ENCODE measurements at regions of chr5 and their contacts with region 1.

Region 1: DNA sequence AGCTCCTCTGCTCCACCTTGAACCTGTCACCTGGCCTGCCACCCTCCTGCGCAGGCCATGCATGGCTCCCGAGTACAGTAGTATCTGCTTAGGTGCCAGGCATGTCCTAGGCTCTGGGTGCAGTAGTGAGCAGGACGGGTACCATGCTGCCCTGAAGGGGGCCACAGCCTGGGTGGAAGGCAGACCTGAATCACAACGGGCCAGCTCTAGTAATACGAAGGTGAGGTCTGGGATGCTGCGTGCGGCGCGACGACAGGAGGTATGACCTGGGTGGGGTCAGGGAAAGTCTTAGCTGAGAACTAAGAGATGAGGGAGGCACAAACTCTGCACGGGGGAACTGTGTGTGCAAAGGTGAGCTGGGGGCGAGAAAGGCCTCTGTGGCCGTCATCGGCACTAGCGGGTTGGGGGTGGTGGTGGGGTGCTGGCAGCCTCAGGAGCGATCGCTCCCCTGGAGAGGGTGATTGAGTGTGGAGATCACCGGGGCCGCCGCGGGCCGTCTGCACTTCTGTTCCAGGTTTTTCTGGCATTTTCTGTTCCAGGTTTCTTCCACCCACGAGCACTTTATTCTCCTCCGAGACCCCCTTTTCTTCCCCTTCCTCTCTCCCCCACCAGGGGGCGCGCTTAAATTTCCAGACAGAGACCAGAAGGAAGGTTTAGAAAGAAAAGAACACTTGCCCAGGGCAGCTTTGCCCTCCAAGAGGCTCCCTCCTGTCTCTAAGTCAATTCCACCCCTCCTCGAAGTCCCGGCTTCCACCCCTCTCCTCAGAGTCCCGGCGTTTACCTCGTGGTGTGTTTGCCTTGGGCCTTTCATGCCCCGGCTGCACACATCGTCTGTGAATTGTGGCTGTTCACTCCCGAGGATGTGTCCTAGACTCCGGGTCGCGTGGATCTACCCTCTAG is 15.1 kb downstream of the PDLIM4 start:
- DNase-seq: no peak
- ATAC-seq: no peak
- H3K4me3 ChIP-seq: no peak overlapping the region
- H3K27ac ChIP-seq: no peak overlapping the region
- H3K4me1 ChIP-seq: peaks cover 30% of the 10 kb centered on the region
- H3K27me3 ChIP-seq: no peaks in the 10 kb centered on the region
- CTCF ChIP-seq: peak; percentile 66 to 81 (median 77)
- EP300 ChIP-seq: no peak
- POLR2A ChIP-seq: no peak
- RAD21 ChIP-seq: peak; percentile 67

Region 2: GRCh38 chr5:132260714-132261551 is 11.6 kb before region 1 on chr5:
- CTCF ChIA-PET with region 1: interaction called, 18 read pairs
- POLR2A ChIA-PET with region 1: interaction called, 7 read pairs
- RAD21 ChIA-PET with region 1: interaction called, 4 read pairs
- SMC1A ChIA-PET with region 1: interaction called, 7 read pairs
- in situ Hi-C with region 1: no loop called
- intact Hi-C with region 1: no loop called
- DNase-seq: peak; percentile 61
- ATAC-seq: peak; percentile 73
- H3K4me3 ChIP-seq: no peak overlapping the region
- H3K27ac ChIP-seq: no peak overlapping the region
- H3K4me1 ChIP-seq: peaks cover 6% of the 10 kb centered on the region; the same call in 1 of the 2 replicates
- H3K27me3 ChIP-seq: peaks cover 2 to 7% of the 10 kb centered on the region in 2 experiments
- CTCF ChIP-seq: no peak
- EP300 ChIP-seq: no peak
- POLR2A ChIP-seq: no peak
- RAD21 ChIP-seq: no peak

Region 3: DNA sequence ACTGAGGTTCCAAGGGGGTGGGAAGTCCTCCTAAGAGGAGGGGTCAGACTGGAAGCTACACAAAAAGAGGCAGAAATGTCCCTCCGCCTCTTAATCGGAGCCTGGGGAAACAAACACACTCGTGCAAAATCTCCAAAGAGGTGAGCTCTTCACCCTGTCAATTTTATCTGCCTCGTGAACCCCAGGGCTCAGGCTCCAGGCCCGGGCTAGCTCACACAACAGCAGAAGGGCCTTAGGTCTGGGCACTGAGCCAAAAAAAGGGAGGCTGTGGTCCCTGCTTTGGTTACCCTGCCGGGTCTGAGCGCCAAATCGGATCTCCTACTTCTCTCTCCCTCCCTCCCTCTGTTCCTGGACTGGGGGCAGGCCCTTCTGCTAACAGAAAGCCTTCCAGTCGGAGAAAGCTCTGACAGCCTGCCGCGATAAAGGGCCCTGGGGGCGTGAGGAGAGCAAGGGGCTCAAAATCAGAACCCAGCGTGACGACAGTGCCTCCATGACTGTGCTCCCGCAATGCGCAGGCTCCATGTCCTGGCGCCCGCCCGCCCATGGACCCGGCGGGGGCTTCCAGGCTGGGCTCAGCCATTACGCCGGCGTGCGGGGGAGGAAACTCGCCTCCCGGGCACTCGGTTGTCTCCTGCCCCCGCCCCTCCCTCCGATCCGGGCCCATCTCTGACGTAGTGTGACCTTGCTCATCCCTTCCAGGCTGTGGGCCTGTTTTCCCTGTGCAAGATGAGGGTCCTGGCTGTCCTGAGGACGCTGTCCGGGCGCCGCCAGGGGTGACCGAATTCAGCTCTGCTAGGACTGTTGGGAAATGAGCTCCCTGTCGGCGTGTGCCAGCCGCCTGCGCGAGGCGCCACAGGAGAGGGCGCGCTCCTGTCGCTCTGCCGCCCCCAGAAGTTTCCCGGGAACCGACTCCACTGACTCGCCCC is 20.8 kb after region 1 on chr5:
- CTCF ChIA-PET with region 1: interaction called, 14 read pairs
- POLR2A ChIA-PET with region 1: interaction called, 10 read pairs
- RAD21 ChIA-PET with region 1: interaction called, 6 read pairs
- SMC1A ChIA-PET with region 1: interaction called, 4 read pairs
- in situ Hi-C with region 1: no loop called
- intact Hi-C with region 1: no loop called
- DNase-seq: no peak
- ATAC-seq: peak; percentile 67
- H3K4me3 ChIP-seq: peak overlapping the region; percentile 70
- H3K27ac ChIP-seq: no peak overlapping the region
- H3K4me1 ChIP-seq: peaks cover 21% of the 10 kb centered on the region
- H3K27me3 ChIP-seq: peaks cover 5 to 25% of the 10 kb centered on the region in 2 experiments; a peak in 3 of 4 replicates
- CTCF ChIP-seq: peak in 2 of 3 experiments; percentile 10 to 18; a peak in 2 of 6 replicates
- EP300 ChIP-seq: no peak
- POLR2A ChIP-seq: peak; percentile 60; the same call in 1 of the 2 replicates
- RAD21 ChIP-seq: no peak

Region 4: GRCh38 chr5:132354381-132355139 is 82.0 kb after region 1 on chr5:
- CTCF ChIA-PET with region 1: interaction called, 4 read pairs
- POLR2A ChIA-PET with region 1: no interaction called
- RAD21 ChIA-PET with region 1: interaction called, 11 read pairs
- SMC1A ChIA-PET with region 1: interaction called, 3 read pairs
- in situ Hi-C with region 1: no loop called
- intact Hi-C with region 1: no loop called
- DNase-seq: no peak
- ATAC-seq: peak; percentile 12; the same call in 1 of the 3 replicates
- H3K4me3 ChIP-seq: no peak overlapping the region
- H3K27ac ChIP-seq: no peak overlapping the region
- H3K4me1 ChIP-seq: peaks cover 12% of the 10 kb centered on the region
- H3K27me3 ChIP-seq: no peaks in the 10 kb centered on the region
- CTCF ChIP-seq: no peak
- EP300 ChIP-seq: no peak
- POLR2A ChIP-seq: no peak
- RAD21 ChIP-seq: no peak

Region 5: DNA sequence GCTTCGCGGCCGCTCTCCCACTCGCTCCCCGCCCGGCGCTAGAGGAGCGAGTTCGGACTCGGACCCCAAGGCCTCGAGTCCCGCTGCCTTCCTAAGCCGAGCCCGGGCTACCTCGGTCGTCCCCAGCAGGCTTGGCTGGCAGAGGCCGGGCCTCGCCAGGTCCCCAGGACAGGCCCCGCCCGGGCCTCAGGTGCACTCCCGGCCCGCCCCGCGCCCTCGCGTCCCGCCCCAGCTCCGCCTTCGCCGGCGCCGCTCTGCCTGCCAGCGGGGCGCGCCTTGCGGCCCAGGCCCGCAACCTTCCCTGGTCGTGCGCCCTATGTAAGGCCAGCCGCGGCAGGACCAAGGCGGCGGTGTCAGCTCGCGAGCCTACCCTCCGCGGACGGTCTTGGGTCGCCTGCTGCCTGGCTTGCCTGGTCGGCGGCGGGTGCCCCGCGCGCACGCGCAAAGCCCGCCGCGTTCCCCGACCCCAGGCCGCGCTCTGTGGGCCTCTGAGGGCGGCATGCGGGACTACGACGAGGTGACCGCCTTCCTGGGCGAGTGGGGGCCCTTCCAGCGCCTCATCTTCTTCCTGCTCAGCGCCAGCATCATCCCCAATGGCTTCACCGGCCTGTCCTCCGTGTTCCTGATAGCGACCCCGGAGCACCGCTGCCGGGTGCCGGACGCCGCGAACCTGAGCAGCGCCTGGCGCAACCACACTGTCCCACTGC is 97.1 kb after region 1 on chr5 and contains the start of gene SLC22A5:
- CTCF ChIA-PET with region 1: interaction called, 8 read pairs
- POLR2A ChIA-PET with region 1: no interaction called
- RAD21 ChIA-PET with region 1: interaction called, 7 read pairs
- SMC1A ChIA-PET with region 1: interaction called, 3 read pairs
- in situ Hi-C with region 1: no loop called
- intact Hi-C with region 1: loop called (anchors 5 kb)
- DNase-seq: no peak
- ATAC-seq: peak; percentile 97
- H3K4me3 ChIP-seq: peak within 1 kb of the TSS; percentile 84
- H3K27ac ChIP-seq: peak within 1 kb of the TSS; percentile 31; the same call in 1 of the 2 replicates
- H3K4me1 ChIP-seq: peaks cover 8% of the 10 kb centered on the region
- H3K27me3 ChIP-seq: no peaks in the 10 kb centered on the region; a peak in 2 of 4 replicates
- CTCF ChIP-seq: no peak
- EP300 ChIP-seq: no peak
- POLR2A ChIP-seq: peak; percentile 71
- RAD21 ChIP-seq: no peak
- polyA plus RNA-seq, gene SLC22A5: 1.1 to 1.9 TPM

Measured in GM12878 (cell line).